Panc1 (cell line): ENCODE measurements at regions of chr20 and their contacts with region 1.

Region 1: GRCh38 chr20:40689943-40690835 is 1.2 kb upstream of the MAFB start:
- DNase-seq: peak; percentile 17
- ATAC-seq: peak; percentile 82
- H3K4me3 ChIP-seq: peak overlapping the region; percentile 45 to 65
- H3K27ac ChIP-seq: no peak overlapping the region
- H3K4me1 ChIP-seq: no peaks in the 10 kb centered on the region
- H3K27me3 ChIP-seq: peaks cover 15% of the 10 kb centered on the region
- CTCF ChIP-seq: peak; percentile 94

Region 2: GRCh38 chr20:40160097-40160550 is 530.1 kb before region 1 on chr20:
- CTCF ChIA-PET with region 1: no interaction called
- POLR2A ChIA-PET with region 1: no interaction called
- in situ Hi-C with region 1: no loop called
- intact Hi-C with region 1: loop called (anchors 5 kb)
- DNase-seq: peak; percentile 22
- ATAC-seq: peak; percentile 76; the same call in 1 of the 2 replicates
- H3K4me3 ChIP-seq: no peak overlapping the region
- H3K27ac ChIP-seq: no peak overlapping the region
- H3K4me1 ChIP-seq: no peaks in the 10 kb centered on the region
- H3K27me3 ChIP-seq: no peaks in the 10 kb centered on the region
- CTCF ChIP-seq: peak; percentile 79